ENCODE measurements at regions of chr16 and their contacts with region 1.

Region 1: DNA sequence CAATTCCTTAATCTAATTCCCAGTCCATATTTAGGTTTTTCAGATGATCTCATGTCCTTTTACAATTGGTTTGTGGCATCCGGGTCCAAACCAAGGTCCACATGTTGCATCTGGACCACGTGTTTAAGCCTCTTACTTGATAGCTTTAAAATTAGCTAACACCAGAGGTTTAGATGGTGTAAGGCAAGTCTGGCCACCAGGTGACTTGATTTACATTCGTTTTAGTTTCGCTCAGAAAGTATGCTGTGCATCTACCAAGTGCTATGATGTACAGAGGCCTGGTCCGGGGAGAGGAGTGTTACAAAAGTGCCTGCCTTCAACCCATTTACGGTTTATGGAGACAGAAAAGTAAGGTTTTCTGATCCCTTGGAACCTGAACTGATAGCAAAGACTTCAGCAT is 878 bp upstream of the DNAJA2 start:
- DNase-seq: no peak
- ATAC-seq: no peak
- H3K4me3 ChIP-seq: peak overlapping the region; percentile 87
- H3K27ac ChIP-seq: 0 out of 2 replicates have a peak overlapping the region, but pooled peaks have one; percentile 52
- H3K4me1 ChIP-seq: peaks cover 34% of the 10 kb centered on the region
- H3K27me3 ChIP-seq: no peaks in the 10 kb centered on the region
- CTCF ChIP-seq: no peak

Region 2: GRCh38 chr16:46954562-46954961 is 19.8 kb before region 1 on chr16:
- CTCF ChIA-PET with region 1: no interaction called
- POLR2A ChIA-PET with region 1: no interaction called
- intact Hi-C with region 1: no loop called
- DNase-seq: no peak
- ATAC-seq: no peak; the same call in 1 of the 2 replicates
- H3K4me3 ChIP-seq: no peak overlapping the region
- H3K27ac ChIP-seq: no peak overlapping the region
- H3K4me1 ChIP-seq: no peaks in the 10 kb centered on the region
- H3K27me3 ChIP-seq: no peaks in the 10 kb centered on the region
- CTCF ChIP-seq: no peak

Region 3: GRCh38 chr16:47004652-47005051 is 30.3 kb after region 1 on chr16:
- CTCF ChIA-PET with region 1: no interaction called
- POLR2A ChIA-PET with region 1: no interaction called
- intact Hi-C with region 1: loop called (anchors 2 kb)
- DNase-seq: no peak
- ATAC-seq: no peak
- H3K4me3 ChIP-seq: no peak overlapping the region
- H3K27ac ChIP-seq: no peak overlapping the region
- H3K4me1 ChIP-seq: no peaks in the 10 kb centered on the region
- H3K27me3 ChIP-seq: no peaks in the 10 kb centered on the region
- CTCF ChIP-seq: no peak

Measured in PC-3 (cell line).